Activated naive CD4-positive, alpha-beta T cell treated with anti-CD3 and anti-CD28 coated beads, Interleukin-2, amount 10 ng/mL, durations not matched to agents 7 days and 5 days (primary cell): ENCODE measurements at regions of chr3 and their contacts with region 1.

Region 1: GRCh38 chr3:39288300-39288808 is 8.5 kb upstream of the CX3CR1 start:
- DNase-seq: peak; percentile 90
- H3K4me3 Mint-ChIP-seq: no peak overlapping the region
- H3K27ac Mint-ChIP-seq: no peak overlapping the region
- H3K4me1 Mint-ChIP-seq: peaks cover 39% of the 10 kb centered on the region
- H3K27me3 Mint-ChIP-seq: peaks cover 3% of the 10 kb centered on the region

Region 2: DNA sequence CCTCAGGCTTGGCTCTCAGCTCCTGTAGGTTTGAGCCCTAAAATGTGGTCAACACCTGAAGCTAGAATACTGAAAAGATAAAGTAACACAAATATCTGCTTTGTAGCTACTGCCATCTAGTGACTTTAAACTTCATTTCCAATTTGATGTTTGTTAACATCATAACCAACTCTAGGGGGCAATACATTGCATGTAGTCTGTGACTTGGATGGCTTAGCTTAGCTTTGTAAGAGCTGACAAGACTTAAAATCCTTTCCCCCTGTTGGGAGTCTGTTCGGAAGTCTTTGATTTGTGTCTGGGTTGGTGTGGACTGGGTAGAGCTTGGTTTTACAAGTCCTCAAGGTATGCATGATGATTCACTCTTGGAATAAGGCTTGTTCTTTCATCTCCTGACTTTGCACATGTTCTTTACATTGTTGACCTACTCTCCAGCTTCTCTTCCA is 288.3 kb before region 1 on chr3:
- CTCF ChIA-PET with region 1: interaction called, 16 read pairs
- DNase-seq: no peak
- H3K4me3 Mint-ChIP-seq: no peak overlapping the region
- H3K27ac Mint-ChIP-seq: no peak overlapping the region
- H3K4me1 Mint-ChIP-seq: no peaks in the 10 kb centered on the region
- H3K27me3 Mint-ChIP-seq: peaks cover 7% of the 10 kb centered on the region

Region 3: DNA sequence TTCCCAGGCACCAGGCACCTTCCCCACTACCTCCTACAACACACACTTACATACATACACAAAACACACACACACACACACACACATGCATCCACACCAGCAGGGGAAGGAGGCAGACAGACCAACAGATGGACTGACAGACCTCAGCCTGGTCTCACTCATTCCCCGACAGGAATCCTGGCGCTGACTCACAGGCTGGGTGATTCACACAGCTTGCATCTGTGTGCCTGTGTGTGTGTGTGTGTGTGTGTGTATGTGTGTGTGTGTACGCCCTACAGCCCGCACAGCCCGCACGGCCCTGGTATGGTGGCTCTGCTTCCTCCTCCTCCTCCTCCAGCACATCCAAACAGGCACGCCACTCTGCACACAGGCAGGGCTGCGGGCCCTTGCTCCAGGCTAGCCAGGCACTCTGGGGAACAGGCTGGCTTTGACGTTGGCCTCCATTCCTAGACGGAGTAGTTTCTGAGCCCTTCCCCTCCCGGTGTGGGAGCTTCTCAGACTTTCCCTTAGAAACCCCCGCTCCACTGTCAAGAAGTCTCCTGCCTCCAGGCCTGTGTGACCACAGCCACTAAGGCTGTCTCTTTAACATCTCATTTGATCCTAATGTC is 141.3 kb before region 1 on chr3:
- CTCF ChIA-PET with region 1: interaction called, 12 read pairs
- DNase-seq: peak; percentile 80
- H3K4me3 Mint-ChIP-seq: peak overlapping the region; percentile 82
- H3K27ac Mint-ChIP-seq: peak overlapping the region; percentile 97
- H3K4me1 Mint-ChIP-seq: peaks cover 81% of the 10 kb centered on the region
- H3K27me3 Mint-ChIP-seq: no peaks in the 10 kb centered on the region

Region 4: DNA sequence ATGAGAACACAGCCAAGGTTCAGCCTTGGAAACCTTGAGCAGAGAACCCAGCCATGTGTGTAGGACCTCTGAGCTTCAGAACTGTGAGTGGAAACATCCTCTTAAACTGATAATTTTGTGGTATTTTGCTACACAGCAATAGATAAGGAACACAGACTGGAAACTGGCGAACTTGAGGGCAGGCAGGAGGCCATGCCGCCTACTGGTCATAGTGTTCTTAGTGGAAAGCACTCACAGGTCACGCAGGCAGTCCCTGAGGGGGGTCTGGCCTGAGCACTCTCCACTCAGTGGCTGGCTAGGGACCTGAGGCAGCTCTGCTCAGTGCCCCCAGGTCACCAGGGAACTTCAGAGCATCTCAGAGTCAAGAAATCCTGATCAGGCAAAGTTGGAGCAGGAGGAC is 86.3 kb before region 1 on chr3:
- CTCF ChIA-PET with region 1: interaction called, 28 read pairs
- DNase-seq: no peak
- H3K4me3 Mint-ChIP-seq: no peak overlapping the region
- H3K27ac Mint-ChIP-seq: no peak overlapping the region
- H3K4me1 Mint-ChIP-seq: no peaks in the 10 kb centered on the region
- H3K27me3 Mint-ChIP-seq: peaks cover 62% of the 10 kb centered on the region

Region 5: DNA sequence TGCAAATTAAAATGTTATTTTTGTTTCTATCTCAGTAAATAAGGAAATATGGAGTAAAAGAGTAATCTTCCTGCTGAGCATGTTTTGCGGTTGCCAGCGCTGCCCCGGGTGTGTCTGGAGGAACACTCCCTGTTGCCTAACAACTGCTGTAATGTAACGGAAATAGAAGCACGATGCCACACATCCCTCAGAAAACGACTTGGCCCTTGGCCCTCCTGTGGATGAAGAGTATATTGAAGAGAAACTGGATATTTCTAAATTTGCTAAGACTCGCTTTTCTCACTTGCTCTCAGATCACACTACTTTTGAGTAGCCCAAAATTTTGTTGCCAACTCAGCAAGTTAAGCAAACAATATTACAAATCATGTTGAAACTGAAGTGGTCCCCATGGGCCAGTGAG is 27.4 kb before region 1 on chr3:
- CTCF ChIA-PET with region 1: interaction called, 17 read pairs
- DNase-seq: peak; percentile 83
- H3K4me3 Mint-ChIP-seq: no peak overlapping the region
- H3K27ac Mint-ChIP-seq: no peak overlapping the region
- H3K4me1 Mint-ChIP-seq: peaks cover 35% of the 10 kb centered on the region
- H3K27me3 Mint-ChIP-seq: peaks cover 58% of the 10 kb centered on the region

Region 6: GRCh38 chr3:39346785-39347585 is 58.6 kb after region 1 on chr3:
- CTCF ChIA-PET with region 1: interaction called, 28 read pairs
- DNase-seq: no peak
- H3K4me3 Mint-ChIP-seq: no peak overlapping the region
- H3K27ac Mint-ChIP-seq: peak overlapping the region; percentile 56
- H3K4me1 Mint-ChIP-seq: peaks cover 54% of the 10 kb centered on the region
- H3K27me3 Mint-ChIP-seq: no peaks in the 10 kb centered on the region